PC-3 (cell line): ENCODE measurements at regions of chr3 and their contacts with region 1.

Region 1: GRCh38 chr3:186849374-186849975 is 7.0 kb downstream of the ADIPOQ start:
- DNase-seq: peak; percentile 71
- ATAC-seq: peak; percentile 70
- H3K4me3 ChIP-seq: no peak overlapping the region
- H3K27ac ChIP-seq: no peak overlapping the region
- H3K4me1 ChIP-seq: no peaks in the 10 kb centered on the region
- H3K27me3 ChIP-seq: peaks cover 10% of the 10 kb centered on the region
- CTCF ChIP-seq: peak; percentile 85

Region 2: DNA sequence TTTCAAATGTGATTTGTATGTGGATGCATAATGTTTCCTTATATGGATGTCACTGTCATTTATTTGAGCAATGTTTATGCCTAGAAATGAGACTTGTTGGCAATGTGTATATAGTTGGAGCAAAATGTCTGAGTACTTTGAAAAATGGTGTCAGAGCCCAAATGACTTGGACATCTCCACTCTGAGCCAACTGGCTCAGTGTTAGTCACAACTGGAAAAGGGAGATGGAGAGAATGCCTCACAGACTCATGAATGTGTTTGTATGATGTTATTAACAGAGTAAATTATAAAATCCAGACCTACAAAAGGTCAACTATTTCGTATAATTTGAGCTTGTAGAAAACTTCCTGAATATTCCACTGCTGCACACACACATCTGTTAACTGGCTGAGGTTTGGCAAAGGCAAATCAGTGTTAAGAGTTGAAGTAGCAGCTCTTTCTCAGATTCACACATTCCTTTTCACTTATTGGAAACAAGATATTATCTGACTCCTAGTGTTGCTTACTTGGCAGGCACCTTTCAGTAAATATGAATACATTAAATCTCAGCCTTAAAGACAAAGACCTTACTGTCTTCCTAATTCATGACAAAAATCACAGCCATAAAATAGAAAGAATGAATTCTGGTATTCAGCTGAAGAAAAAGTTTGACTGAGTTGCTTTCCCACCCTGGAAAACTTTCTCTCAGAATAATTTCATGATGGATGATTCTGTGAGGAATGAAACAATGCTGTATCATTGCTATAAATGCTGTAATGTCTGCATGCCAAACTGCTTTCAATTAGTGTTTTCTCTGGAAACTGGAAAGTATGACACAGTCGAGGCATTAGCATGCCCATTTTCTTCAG is 20.0 kb after region 1 on chr3:
- CTCF ChIA-PET with region 1: no interaction called
- POLR2A ChIA-PET with region 1: no interaction called
- intact Hi-C with region 1: no loop called
- DNase-seq: peak; percentile 37
- ATAC-seq: peak; percentile 69
- H3K4me3 ChIP-seq: no peak overlapping the region
- H3K27ac ChIP-seq: peak overlapping the region; percentile 27; the same call in 1 of the 2 replicates
- H3K4me1 ChIP-seq: peaks cover 19% of the 10 kb centered on the region; the same call in 1 of the 2 replicates
- H3K27me3 ChIP-seq: no peaks in the 10 kb centered on the region
- CTCF ChIP-seq: no peak

Region 3: DNA sequence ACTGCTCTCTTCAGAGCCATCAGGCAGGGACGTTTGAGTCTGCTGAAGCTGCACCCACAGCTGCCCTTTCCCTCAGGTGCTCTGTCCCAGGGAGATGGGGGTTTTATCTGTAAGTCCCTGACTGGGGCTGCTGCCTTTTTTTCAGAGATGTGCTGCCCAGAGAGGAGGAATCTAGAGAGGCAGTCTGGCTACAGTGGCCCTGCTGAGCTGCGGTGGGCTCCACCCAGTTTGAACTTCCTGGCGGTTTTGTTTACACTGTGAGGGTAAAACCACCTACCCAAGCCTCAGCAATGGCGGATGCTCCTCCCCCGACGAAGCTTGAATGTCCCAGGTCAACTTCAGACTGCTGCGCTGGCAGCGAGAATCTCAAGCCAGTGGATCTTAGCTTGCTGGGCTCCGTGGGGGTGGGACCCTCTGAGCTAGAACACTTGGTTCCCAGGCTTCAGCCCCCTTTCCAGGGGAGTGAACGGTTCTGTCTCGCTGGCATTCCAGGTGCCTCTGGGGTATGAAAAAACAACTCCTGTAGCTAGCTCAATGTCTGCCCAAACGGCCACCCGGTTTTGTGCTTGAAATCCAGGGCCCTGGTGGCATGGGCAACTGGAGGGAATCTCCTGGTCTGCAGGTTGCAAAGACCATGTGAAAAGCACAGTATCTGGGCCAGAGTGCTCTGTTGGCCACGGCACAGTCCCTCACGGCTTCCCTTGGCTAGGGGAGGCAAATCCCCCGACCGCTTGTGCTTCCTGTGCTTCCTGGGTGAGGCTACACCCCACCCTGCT is 59.8 kb after region 1 on chr3:
- CTCF ChIA-PET with region 1: no interaction called
- POLR2A ChIA-PET with region 1: no interaction called
- intact Hi-C with region 1: no loop called
- DNase-seq: no peak
- ATAC-seq: no peak
- H3K4me3 ChIP-seq: no peak overlapping the region
- H3K27ac ChIP-seq: no peak overlapping the region
- H3K4me1 ChIP-seq: no peaks in the 10 kb centered on the region
- H3K27me3 ChIP-seq: no peaks in the 10 kb centered on the region
- CTCF ChIP-seq: no peak

Region 4: GRCh38 chr3:186930641-186931531 is 81.4 kb after region 1 on chr3:
- CTCF ChIA-PET with region 1: no interaction called
- POLR2A ChIA-PET with region 1: no interaction called
- intact Hi-C with region 1: loop called (anchors 2 kb)
- DNase-seq: peak; percentile 62
- ATAC-seq: peak; percentile 65
- H3K4me3 ChIP-seq: peak overlapping the region; percentile 77
- H3K27ac ChIP-seq: no peak overlapping the region
- H3K4me1 ChIP-seq: peaks cover 6% of the 10 kb centered on the region; the same call in 1 of the 2 replicates
- H3K27me3 ChIP-seq: no peaks in the 10 kb centered on the region
- CTCF ChIP-seq: no peak; the same call in 1 of the 2 replicates

Region 5: DNA sequence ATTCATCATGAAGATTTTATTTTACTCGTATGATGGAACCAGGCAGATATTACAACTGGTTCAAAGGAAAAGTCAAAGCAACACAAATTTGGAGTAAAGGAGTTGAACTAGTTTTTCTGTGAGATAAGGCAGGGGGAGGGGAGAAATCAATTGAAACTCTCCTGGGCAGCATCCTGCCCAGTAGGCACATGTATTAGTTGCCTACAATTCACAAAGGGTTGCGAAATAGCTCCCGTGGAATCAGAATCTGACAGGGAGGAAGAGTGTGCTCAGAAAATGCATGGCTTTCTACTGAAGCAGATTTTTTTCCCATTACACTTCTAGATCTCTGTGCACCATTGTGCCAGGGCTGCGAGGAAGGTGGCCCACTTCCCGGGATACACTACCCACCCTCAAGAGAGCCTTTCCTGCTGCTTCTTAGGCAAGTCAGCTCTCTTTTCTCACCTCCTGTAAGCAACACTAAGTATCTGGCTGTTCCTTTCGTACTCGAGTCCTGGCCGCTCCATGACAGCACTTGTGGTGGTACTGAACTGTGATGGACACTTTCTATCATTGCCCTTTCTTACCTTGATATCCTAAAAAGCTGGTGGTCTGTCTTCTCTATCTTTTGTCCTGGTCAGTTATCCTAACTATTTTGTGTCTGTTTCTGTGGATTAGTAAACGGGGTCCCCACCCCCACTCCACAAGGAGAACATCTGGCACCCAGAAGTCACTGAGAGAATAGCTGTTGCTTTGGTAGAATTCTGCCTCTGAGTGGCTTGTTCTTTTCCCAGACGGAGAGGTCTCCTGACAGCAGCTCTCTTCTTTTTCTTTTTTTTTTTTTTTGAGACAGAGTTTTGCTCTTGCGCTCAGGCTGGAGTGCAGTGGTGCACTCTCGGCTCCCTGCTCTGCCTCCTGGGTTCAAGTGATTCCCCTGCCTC is 215.0 kb after region 1 on chr3:
- CTCF ChIA-PET with region 1: no interaction called
- POLR2A ChIA-PET with region 1: no interaction called
- intact Hi-C with region 1: loop called (anchors 2 kb)
- DNase-seq: peak; percentile 83
- ATAC-seq: no peak
- H3K4me3 ChIP-seq: peak overlapping the region; percentile 12; the same call in 1 of the 2 replicates
- H3K27ac ChIP-seq: peak overlapping the region; percentile 97
- H3K4me1 ChIP-seq: peaks cover 45% of the 10 kb centered on the region
- H3K27me3 ChIP-seq: no peaks in the 10 kb centered on the region
- CTCF ChIP-seq: no peak

Region 6: GRCh38 chr3:187112934-187113793 is 263.7 kb after region 1 on chr3:
- CTCF ChIA-PET with region 1: interaction called, 8 read pairs
- POLR2A ChIA-PET with region 1: no interaction called
- intact Hi-C with region 1: loop called (anchors 1 kb)
- DNase-seq: peak; percentile 66
- ATAC-seq: 0 out of 2 replicates have a peak, but pooled peaks have one; percentile 20
- H3K4me3 ChIP-seq: no peak overlapping the region
- H3K27ac ChIP-seq: no peak overlapping the region
- H3K4me1 ChIP-seq: no peaks in the 10 kb centered on the region
- H3K27me3 ChIP-seq: no peaks in the 10 kb centered on the region
- CTCF ChIP-seq: peak; percentile 86

Region 7: DNA sequence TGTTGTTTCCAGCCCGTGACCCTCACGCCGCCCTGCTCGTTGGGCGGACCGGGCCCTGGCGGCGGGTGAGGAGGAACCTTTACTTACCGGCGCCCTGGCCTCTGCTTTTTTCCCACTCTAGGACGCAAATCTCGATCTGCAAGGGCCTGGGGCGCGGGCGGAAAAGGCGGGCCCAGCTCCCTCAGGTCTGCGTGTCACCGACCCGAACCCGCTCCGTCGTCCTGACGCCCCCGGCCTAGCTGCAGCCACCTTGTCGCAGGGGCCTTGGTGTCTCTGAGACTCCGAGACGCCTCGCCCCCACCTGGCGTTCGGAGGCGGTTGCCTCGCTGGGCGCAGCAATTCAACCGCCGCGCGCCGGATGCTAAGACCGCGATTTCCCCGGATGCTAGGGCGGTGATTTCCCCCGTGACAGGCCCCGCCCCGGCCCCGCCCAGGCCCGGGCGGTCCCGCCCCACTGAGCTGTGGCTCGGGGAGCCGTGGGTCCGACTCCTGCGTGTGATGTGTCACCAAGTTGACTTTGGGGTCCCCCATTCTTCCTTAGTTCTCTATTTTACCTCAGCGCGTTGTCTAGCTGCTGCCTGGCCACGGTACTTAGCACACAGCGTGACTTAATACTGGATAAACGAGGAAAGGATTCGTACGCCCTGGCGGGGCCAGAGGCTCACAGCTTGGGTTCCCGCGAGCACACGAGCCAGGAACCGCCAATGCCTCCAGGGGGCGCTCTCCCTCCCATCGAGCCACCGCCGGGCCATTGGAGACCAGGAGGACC is 289.8 kb after region 1 on chr3 and contains the start of gene RPL39L:
- CTCF ChIA-PET with region 1: interaction called, 8 read pairs
- POLR2A ChIA-PET with region 1: no interaction called
- intact Hi-C with region 1: loop called (anchors 1 kb)
- DNase-seq: peak; percentile 88
- ATAC-seq: peak; percentile 92
- H3K4me3 ChIP-seq: peak within 1 kb of the TSS; percentile 73
- H3K27ac ChIP-seq: peak within 1 kb of the TSS; percentile 62
- H3K4me1 ChIP-seq: peaks cover 21% of the 10 kb centered on the region
- H3K27me3 ChIP-seq: no peaks in the 10 kb centered on the region
- CTCF ChIP-seq: peak; percentile 95
- total RNA-seq, gene RPL39L: 155 and 175 TPM in 2 replicates

Region 8: GRCh38 chr3:187164885-187165543 is 315.5 kb after region 1 on chr3:
- CTCF ChIA-PET with region 1: interaction called, 15 read pairs
- POLR2A ChIA-PET with region 1: no interaction called
- intact Hi-C with region 1: loop called (anchors 1 kb)
- DNase-seq: peak; percentile 82
- ATAC-seq: peak; percentile 81
- H3K4me3 ChIP-seq: no peak overlapping the region
- H3K27ac ChIP-seq: no peak overlapping the region
- H3K4me1 ChIP-seq: peaks cover 5% of the 10 kb centered on the region; the same call in 1 of the 2 replicates
- H3K27me3 ChIP-seq: 0 out of 2 replicates have a peak, but pooled peaks cover 3% of the 10 kb centered on the region
- CTCF ChIP-seq: peak; percentile 80